Pancreas (tissue), 10 donors: ENCODE measurements at regions of chr12 and their contacts with region 1.

Region 1: DNA sequence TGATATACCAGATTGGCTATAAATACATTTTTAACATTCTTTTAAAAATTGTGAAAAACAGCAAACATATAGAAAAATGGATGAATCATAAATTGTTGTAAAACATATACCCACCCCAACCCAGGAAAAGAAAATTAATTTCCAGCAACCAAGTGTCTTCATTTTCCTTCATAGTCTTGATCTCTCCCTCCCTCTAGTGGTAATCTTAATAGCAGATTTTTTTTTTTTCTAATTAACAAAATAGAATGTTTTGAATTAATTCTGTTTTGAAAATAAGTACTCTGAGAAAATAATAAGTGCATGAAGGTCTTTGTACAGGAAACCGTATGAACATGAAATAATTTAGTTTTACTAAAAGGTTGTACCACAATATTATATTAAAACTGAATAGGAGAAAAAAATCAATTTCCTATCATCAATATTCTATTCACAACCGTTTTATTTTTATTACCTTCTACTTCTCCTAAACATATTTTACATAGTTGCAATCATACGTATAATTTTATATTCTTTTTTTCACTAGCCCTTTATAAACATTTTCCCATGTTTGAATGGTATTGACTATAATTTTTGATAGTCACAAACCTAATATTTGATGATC is 7.0 kb downstream of the ETNK1 start:
- DNase-seq: no peak
- ATAC-seq: peak in 3 of 4 donors; percentile 48 to 58 (median 49)
- H3K4me3 ChIP-seq: no peak overlapping the region
- H3K27ac ChIP-seq: no peak overlapping the region
- H3K4me1 ChIP-seq: peaks cover 2 to 38% (median 27%) of the 10 kb centered on the region in 3 donors
- H3K27me3 ChIP-seq: no peaks in the 10 kb centered on the region
- CTCF ChIP-seq: peak in 3 of 4 donors; percentile 32 to 46 (median 34)

Region 2: DNA sequence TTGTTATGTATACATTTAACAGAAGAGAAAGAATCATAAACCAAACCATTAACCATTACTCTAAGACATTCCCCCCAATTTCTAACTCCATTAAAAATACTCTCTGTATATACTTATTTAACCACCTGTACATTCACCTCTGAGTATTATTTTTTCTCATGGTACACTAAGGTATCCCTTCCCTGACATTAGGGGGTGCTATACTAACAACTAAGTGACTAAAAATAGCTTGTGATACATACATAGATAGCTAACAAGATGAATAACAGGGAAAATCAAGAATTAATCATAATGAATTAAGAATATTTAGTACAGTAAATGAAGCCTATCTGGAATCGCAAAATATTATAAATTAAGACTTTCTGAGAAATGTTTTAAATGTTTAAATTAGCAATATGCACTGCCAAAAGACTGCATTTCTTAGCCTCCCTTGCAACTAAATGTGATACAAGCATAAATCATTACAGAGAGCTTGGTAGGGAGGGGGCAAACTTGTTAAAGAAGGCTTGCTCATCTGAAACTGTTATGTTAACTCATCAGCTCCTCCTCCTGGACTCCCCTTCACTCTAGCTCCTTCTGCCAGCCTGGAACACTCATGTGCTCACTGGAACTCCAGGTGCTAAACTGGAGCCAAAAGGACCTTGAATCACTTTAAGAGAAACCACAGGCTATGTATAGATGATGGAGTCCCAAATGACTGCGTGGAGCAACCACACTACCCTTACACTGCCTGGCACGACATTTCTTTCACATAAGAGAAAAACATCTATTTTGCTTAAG is 102.5 kb before region 1 on chr12:
- intact Hi-C with region 1: loop called in 1 of 3 experiments (anchors 10 kb)
- DNase-seq: no peak
- ATAC-seq: peak in 3 of 4 donors; percentile 70 to 82 (median 72)
- H3K4me3 ChIP-seq: no peak overlapping the region
- H3K27ac ChIP-seq: no peak overlapping the region
- H3K4me1 ChIP-seq: no peaks in the 10 kb centered on the region
- H3K27me3 ChIP-seq: no peaks in the 10 kb centered on the region
- CTCF ChIP-seq: peak in 2 of 4 donors; percentile 21 to 27

Region 3: GRCh38 chr12:24045816-24046257 is 1413.9 kb after region 1 on chr12:
- intact Hi-C with region 1: no loop called
- DNase-seq: no peak
- ATAC-seq: no peak
- H3K4me3 ChIP-seq: no peak overlapping the region
- H3K27ac ChIP-seq: no peak overlapping the region
- H3K4me1 ChIP-seq: no peaks in the 10 kb centered on the region
- H3K27me3 ChIP-seq: no peaks in the 10 kb centered on the region
- CTCF ChIP-seq: no peak